ENCODE measurements at regions of chr2 and their contacts with region 1.

Region 1: DNA sequence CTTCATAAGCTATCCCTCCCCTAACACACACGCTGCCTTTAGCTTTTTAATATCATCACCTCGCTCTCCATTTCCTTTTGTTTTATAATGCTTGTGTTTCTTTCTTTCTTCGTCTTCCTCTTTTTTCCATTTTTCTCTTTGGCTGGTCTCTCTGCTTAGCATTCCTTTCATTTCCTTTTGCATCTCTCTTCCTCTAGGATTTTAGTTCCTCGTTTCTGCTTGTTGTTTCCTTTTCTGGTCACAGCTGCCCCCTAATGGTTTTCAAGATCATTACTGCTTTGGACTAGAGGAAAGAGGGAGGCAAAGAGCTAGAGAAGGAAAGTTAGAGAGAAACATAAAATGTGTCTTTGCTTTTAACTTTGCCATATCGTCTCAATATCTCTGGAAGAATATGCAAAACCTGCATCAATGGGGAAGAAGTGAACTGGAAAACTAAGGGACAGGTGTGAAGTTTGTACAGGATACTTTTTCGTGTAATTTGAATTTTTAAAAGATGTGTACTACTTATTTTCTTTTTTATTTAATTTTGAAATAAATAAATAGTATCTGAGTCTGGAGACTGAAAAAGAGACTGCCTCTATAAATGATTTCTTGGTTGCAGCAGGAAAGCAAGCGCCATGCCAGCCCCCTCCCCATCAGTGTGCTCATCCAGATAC is 6.3 kb upstream of the NRP2 start:
- DNase-seq: peak in 2 of 3 donors; percentile 50 to 55
- H3K4me3 ChIP-seq: peak overlapping the region in 1 of 7 experiments; percentile 19
- H3K27ac ChIP-seq: no peak overlapping the region
- H3K4me1 ChIP-seq: no peaks in the 10 kb centered on the region
- H3K27me3 ChIP-seq: peaks cover 0 to 17% (median 11%) of the 10 kb centered on the region in 5 experiments

Region 2: GRCh38 chr2:204871231-204871953 is 804.6 kb before region 1 on chr2:
- CTCF ChIA-PET with region 1: interaction called, 14 read pairs
- POLR2A ChIA-PET with region 1: no interaction called
- DNase-seq: peak; percentile 40 to 51 (median 41)
- H3K4me3 ChIP-seq: no peak overlapping the region
- H3K27ac ChIP-seq: no peak overlapping the region
- H3K4me1 ChIP-seq: no peaks in the 10 kb centered on the region
- H3K27me3 ChIP-seq: no peaks in the 10 kb centered on the region

Region 3: GRCh38 chr2:204885747-204886146 is 790.2 kb before region 1 on chr2:
- CTCF ChIA-PET with region 1: interaction called, 13 read pairs
- POLR2A ChIA-PET with region 1: no interaction called
- DNase-seq: peak; percentile 45 to 67 (median 60)
- H3K4me3 ChIP-seq: no peak overlapping the region
- H3K27ac ChIP-seq: no peak overlapping the region
- H3K4me1 ChIP-seq: no peaks in the 10 kb centered on the region
- H3K27me3 ChIP-seq: no peaks in the 10 kb centered on the region